ENCODE measurements at regions of chr3 and their contacts with region 1.

Region 1: GRCh38 chr3:112734718-112735350 is 93.9 kb upstream of the CCDC80 start:
- DNase-seq: peak; percentile 40
- ATAC-seq: peak; percentile 94
- H3K4me3 ChIP-seq: no peak overlapping the region
- H3K27ac ChIP-seq: no peak overlapping the region
- H3K4me1 ChIP-seq: no peaks in the 10 kb centered on the region
- H3K27me3 ChIP-seq: no peaks in the 10 kb centered on the region; a peak in 1 of 4 replicates
- CTCF ChIP-seq: peak; percentile 71 to 84 (median 71)
- EP300 ChIP-seq: no peak
- POLR2A ChIP-seq: no peak
- RAD21 ChIP-seq: peak; percentile 91

Region 2: DNA sequence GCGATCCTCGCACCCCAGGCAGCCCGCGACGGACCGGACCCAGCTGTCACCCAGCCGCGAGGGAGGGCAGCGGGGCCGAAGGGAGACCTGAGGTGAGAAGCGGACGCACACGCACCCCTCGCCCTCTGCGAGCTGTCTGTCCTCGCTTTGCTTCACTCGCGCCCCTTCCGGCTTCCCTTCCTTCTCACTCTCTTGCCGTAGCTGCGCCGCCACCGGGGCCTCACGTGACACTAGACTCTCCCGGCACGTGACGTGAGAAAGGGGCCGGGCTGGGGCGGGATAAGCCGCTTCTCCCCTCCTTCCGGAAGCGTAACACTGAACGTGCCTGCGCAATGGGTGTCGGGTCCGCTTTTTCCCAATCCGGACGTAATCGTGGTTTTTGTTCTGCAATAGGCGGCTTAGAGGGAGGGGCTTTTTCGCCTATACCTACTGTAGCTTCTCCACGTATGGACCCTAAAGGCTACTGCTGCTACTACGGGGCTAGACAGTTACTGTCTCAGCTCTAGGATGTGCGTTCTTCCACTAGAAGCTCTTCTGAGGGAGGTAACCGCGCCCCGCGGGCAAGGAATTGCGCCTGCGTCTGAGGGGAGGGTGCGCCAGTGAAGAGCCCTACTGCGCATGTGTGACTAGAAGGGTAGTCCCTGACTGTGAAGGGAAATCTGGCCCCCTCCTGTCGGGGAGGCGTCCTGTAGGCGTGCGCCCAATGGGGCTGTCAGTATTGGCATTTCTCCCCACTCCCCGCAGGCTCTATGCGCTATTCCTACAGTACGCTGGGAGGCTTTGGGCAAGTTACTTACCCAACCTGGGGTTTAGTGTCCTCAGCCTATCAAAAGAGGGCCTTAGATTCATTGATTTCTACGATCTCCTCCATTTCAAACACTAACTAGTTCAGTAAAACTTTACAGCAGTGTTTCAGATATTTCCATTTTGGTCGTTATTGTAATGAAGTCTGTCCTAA is 172.8 kb before region 1 on chr3 and contains the starts of genes ATG3 and SLC35A5:
- CTCF ChIA-PET with region 1: no interaction called
- POLR2A ChIA-PET with region 1: no interaction called
- RAD21 ChIA-PET with region 1: no interaction called
- SMC1A ChIA-PET with region 1: no interaction called
- in situ Hi-C with region 1: no loop called
- intact Hi-C with region 1: no loop called
- DNase-seq: peak; percentile 96
- ATAC-seq: peak; percentile 88
- H3K4me3 ChIP-seq: peak within 1 kb of the TSS; percentile 81
- H3K27ac ChIP-seq: peak within 1 kb of the TSS; percentile 92
- H3K4me1 ChIP-seq: peaks cover 4% of the 10 kb centered on the region; the same call in 1 of the 2 replicates
- H3K27me3 ChIP-seq: no peaks in the 10 kb centered on the region
- CTCF ChIP-seq: 0 out of 6 replicates have a peak, but pooled peaks of 2 of the 3 experiments have one; percentile 0 to 9
- EP300 ChIP-seq: peak; percentile 42 to 57; a peak in 1 of 4 replicates
- POLR2A ChIP-seq: peak; percentile 89
- RAD21 ChIP-seq: no peak
- polyA plus RNA-seq, gene ATG3: 49.8 to 71.2 TPM
- polyA plus RNA-seq, gene SLC35A5: 10.9 to 15.7 TPM

Region 3: DNA sequence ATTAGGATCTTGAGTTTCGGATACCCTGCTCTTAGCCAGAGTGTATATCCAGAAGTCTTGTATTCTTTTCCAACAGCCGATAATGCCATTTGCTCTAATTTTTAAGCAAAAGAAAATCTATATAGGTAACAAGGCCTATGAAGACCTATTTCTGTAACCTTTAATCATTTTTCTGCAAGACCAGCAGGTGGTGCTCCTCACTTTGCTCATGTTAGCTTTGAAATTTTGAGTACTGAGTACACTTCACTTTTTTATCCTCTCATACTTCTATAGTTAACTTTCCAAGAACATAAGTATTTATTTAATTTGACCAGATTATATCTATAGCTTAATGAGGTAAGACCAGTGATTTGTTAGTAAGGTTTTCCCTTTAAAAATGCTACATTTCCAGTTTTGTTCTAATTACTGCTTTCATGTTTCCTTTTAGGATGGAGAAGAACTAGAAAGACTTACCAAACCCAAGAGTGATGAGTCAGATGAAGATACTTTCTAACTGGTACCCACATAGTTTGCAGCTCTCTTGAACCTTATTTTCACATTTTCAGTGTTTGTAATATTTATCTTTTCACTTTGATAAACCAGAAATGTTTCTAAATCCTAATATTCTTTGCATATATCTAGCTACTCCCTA is 152.5 kb before region 1 on chr3:
- CTCF ChIA-PET with region 1: interaction called, 15 read pairs
- POLR2A ChIA-PET with region 1: no interaction called
- RAD21 ChIA-PET with region 1: interaction called, 8 read pairs
- SMC1A ChIA-PET with region 1: interaction called, 5 read pairs
- in situ Hi-C with region 1: no loop called
- intact Hi-C with region 1: no loop called
- DNase-seq: no peak
- ATAC-seq: peak; percentile 71
- H3K4me3 ChIP-seq: no peak overlapping the region
- H3K27ac ChIP-seq: no peak overlapping the region
- H3K4me1 ChIP-seq: no peaks in the 10 kb centered on the region
- H3K27me3 ChIP-seq: no peaks in the 10 kb centered on the region
- CTCF ChIP-seq: peak; percentile 55 to 63 (median 60)
- EP300 ChIP-seq: no peak
- POLR2A ChIP-seq: no peak
- RAD21 ChIP-seq: peak; percentile 72

Region 4: GRCh38 chr3:112751564-112752512 is 17.0 kb after region 1 on chr3:
- CTCF ChIA-PET with region 1: interaction called, 65 read pairs
- POLR2A ChIA-PET with region 1: no interaction called
- RAD21 ChIA-PET with region 1: interaction called, 4 read pairs
- SMC1A ChIA-PET with region 1: interaction called, 46 read pairs
- in situ Hi-C with region 1: no loop called
- intact Hi-C with region 1: no loop called
- DNase-seq: no peak
- ATAC-seq: no peak
- H3K4me3 ChIP-seq: no peak overlapping the region
- H3K27ac ChIP-seq: no peak overlapping the region
- H3K4me1 ChIP-seq: no peaks in the 10 kb centered on the region
- H3K27me3 ChIP-seq: no peaks in the 10 kb centered on the region; a peak in 1 of 4 replicates
- CTCF ChIP-seq: no peak
- EP300 ChIP-seq: no peak
- POLR2A ChIP-seq: no peak
- RAD21 ChIP-seq: no peak

Region 5: DNA sequence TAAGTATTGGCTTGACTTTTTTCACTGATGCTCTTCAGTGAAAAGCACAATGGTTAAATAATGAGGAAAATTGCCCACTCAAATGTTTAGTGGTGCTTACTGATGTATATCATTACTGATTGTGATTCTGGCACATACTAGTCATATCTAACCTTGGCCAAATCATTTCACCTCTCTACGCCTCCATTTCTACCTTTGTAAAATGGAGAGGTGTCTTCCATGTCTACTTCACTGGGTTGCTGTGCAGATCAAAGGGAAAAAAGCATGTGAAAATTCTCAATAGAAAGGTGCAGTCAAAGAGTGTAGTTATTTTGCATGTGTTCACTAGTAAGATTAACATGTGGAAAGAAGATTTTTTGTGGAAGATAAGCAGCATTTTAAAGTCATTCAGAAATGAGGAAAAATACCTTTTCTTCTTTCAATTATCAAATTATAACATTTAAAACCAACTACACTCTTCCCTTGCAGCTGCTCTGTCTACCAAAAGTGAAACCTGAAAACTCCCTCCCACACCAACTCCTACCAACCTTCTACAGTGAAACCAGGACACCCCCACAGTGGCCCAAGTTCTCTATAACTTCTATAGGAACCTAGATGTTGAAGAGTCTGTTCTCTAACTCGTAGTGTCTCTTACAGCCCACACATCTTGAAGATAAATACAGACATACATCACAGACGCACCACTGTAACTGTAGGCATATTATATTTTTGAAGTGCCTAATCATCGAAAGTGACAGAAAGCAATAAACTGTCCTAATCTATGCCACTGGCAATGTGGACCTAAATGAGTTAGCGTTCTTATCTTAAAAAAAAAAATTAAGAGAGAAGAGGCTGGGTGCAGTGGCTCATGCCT is 238.7 kb after region 1 on chr3:
- CTCF ChIA-PET with region 1: interaction called, 165 read pairs
- POLR2A ChIA-PET with region 1: interaction called, 5 read pairs
- RAD21 ChIA-PET with region 1: interaction called, 99 read pairs
- SMC1A ChIA-PET with region 1: interaction called, 174 read pairs
- in situ Hi-C with region 1: loop called (anchors 5 kb)
- intact Hi-C with region 1: no loop called
- DNase-seq: peak; percentile 66
- ATAC-seq: peak; percentile 90
- H3K4me3 ChIP-seq: peak overlapping the region; percentile 45
- H3K27ac ChIP-seq: peak overlapping the region; percentile 77
- H3K4me1 ChIP-seq: peaks cover 34% of the 10 kb centered on the region
- H3K27me3 ChIP-seq: no peaks in the 10 kb centered on the region
- CTCF ChIP-seq: no peak
- EP300 ChIP-seq: peak; percentile 57 to 67; a peak in 2 of 4 replicates
- POLR2A ChIP-seq: no peak
- RAD21 ChIP-seq: no peak

Region 6: DNA sequence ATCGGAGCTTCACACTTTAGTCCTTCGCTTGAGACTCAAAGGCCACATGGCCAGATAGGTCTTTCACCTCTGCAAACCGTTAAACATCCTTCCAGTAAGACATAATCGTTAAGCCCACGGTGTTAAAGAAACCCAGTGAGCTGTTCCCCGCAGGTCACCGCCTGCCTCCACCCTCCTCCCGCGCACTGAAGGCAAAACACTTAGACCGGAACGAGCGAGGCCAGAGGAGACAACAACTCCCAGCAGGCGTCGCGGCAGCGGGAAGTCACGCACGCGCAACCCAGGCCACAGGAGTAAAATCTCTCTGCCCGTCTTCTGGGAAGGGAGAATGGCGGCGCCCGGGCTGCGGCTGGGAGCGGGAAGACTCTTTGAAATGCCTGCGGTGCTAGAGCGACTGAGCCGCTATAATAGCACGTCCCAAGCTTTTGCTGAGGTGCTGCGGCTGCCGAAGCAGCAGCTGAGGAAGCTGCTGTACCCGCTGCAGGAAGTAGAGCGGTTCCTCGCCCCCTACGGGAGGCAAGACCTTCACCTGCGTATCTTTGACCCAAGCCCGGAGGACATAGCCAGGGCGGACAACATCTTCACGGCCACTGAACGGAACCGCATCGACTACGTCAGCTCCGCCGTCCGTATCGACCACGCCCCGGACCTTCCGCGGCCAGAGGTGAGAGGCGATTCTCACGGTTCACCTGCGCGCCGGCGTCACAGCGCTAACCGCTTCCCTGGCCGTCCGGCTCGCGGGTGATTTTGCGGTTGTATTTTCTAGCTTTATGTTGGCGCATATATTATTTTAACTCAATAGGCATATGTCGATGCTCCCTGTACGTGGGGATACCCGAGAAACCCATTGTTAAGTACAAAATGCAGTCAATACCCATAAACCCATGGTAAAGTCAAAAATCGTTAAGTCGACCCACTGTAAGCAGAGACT is 256.1 kb after region 1 on chr3 and contains the start of gene GTPBP8:
- CTCF ChIA-PET with region 1: interaction called, 18 read pairs
- POLR2A ChIA-PET with region 1: no interaction called
- RAD21 ChIA-PET with region 1: interaction called, 16 read pairs
- SMC1A ChIA-PET with region 1: interaction called, 174 read pairs
- in situ Hi-C with region 1: no loop called
- intact Hi-C with region 1: no loop called
- DNase-seq: peak; percentile 69
- ATAC-seq: peak; percentile 94
- H3K4me3 ChIP-seq: peak within 1 kb of the TSS; percentile 69
- H3K27ac ChIP-seq: peak within 1 kb of the TSS; percentile 90
- H3K4me1 ChIP-seq: peaks cover 6% of the 10 kb centered on the region
- H3K27me3 ChIP-seq: no peaks in the 10 kb centered on the region
- CTCF ChIP-seq: no peak
- EP300 ChIP-seq: peak; percentile 65 to 82; a peak in 3 of 4 replicates
- POLR2A ChIP-seq: peak; percentile 88
- RAD21 ChIP-seq: no peak
- polyA plus RNA-seq, gene GTPBP8: 18.8 to 29.0 TPM

Region 7: DNA sequence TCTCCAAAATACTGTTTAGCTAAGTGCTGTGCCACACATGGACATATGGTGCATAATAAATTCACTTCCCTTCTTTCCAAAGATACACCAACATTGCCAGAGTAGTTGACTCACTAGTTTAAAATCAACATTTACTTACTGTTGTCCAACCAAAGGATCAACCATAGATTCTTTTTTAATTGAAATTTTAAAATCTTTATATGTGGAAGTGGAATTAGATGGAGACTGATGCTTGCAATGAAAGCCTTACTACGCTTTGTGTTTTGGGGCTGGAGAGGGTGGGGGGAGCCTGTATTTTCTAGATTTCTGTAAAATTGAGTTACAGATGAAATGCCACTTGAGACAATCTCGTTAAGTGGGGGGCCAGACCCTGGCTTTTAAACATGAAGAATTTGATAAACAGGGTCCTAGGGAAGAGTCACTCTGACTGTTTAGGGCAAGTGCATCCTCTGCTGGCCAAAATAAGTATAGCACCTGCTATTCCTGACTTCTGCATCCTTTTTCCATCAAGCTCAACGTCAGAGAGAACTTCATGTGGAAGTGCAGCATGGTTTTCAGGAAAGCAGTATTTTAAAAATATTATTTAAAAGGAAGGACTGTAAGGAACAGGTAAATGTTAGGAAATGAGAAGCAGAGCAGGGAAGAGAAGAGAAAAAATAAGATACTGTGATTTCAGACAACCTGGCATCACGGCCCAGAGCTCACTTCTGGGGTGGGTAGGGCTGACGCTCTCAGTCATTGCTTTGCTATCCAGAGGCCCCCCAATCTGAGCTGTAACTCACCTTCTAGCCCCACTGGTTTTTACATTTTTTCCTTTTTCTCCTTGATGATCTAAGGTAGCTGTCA is 553.2 kb after region 1 on chr3:
- CTCF ChIA-PET with region 1: interaction called, 20 read pairs
- POLR2A ChIA-PET with region 1: no interaction called
- RAD21 ChIA-PET with region 1: interaction called, 7 read pairs
- SMC1A ChIA-PET with region 1: interaction called, 5 read pairs
- in situ Hi-C with region 1: no loop called
- intact Hi-C with region 1: no loop called
- DNase-seq: no peak
- ATAC-seq: peak; percentile 65
- H3K4me3 ChIP-seq: no peak overlapping the region
- H3K27ac ChIP-seq: no peak overlapping the region
- H3K4me1 ChIP-seq: no peaks in the 10 kb centered on the region
- H3K27me3 ChIP-seq: no peaks in the 10 kb centered on the region
- CTCF ChIP-seq: peak; percentile 97 to 100 (median 99)
- EP300 ChIP-seq: no peak
- POLR2A ChIP-seq: no peak
- RAD21 ChIP-seq: peak; percentile 97